ENCODE measurements at regions of chr1 and their contacts with region 1.

Region 1: DNA sequence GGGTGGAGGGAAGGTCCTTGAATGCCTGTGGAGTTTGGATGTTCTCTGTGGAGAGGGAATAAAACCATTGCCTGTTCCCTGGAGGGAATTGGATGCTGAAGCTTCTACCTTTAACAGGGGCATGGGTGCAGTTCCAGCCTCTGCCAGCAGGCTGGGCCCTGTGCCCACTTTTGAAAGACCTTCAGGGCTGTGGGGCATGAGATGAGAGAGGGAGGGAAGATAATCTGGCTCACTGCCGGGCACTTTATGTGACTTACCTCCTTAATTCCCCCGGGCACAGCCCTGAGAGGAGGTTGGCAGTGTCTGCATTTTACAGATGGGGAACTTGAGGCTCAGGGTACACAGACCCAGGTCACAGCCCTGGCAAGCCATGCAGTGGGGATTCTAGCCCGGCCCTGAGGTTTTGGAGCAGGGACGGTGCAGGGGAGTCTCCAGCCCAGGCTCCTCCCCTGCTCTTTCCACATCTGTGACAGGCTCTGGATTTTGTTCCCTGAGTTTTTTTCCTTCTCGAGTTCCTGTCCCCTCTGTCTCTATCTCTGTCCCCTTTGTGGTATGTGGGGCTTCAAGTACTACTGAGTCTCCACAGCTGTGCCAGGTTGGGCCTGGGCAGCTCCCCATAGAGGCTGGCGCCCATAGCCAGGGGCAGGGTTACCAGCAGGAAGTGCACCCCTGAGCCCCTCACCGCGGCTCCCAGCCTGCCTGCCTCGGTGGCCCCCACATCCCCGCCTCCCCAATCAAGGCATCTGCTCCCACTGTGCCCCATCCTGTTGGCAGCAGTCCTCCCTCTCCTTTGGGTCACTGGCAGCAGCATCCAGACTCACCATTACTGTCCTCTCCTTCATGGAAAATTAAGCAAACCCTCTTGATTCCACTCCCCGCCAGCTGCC is 14.0 kb upstream of the THEMIS2 start:
- DNase-seq: peak; percentile 84 to 89 (median 88)
- H3K4me3 ChIP-seq: peak overlapping the region in 2 of 3 experiments; percentile 13 to 60
- H3K4me3 Mint-ChIP-seq: peak overlapping the region; percentile 60 to 86
- H3K27ac ChIP-seq: peak overlapping the region; percentile 73 to 75
- H3K27ac Mint-ChIP-seq: peak overlapping the region; percentile 91 to 100 (median 96)
- H3K4me1 ChIP-seq: peaks cover 49 to 54% of the 10 kb centered on the region in 2 donors
- H3K4me1 Mint-ChIP-seq: peaks cover 56% of the 10 kb centered on the region
- H3K27me3 ChIP-seq: no peaks in the 10 kb centered on the region
- H3K27me3 Mint-ChIP-seq: peaks cover 0 to 1% (median 0%) of the 10 kb centered on the region in 3 donors
- CTCF ChIP-seq: peak; percentile 98

Region 2: DNA sequence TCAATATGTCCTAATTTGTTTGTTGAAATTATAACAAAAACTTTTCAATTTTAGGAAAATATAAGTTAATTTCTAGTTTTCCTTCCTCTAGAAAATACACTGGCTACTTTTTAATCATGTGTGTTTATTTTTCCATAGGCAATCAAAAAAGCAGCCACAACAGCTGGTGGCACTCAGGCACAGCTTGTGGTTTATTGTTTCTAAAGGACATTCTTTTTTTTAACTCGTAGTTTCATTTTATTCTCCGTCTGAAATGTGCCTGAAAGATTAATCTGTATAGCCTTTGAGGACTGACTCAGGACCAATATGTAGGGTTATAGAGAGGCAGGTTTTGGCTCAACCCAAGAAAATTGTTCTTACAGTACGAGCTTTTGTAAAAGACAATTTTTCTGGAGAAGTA is 106.0 kb before region 1 on chr1:
- intact Hi-C with region 1: no loop called
- DNase-seq: no peak
- H3K4me3 ChIP-seq: no peak overlapping the region
- H3K4me3 Mint-ChIP-seq: no peak overlapping the region
- H3K27ac ChIP-seq: no peak overlapping the region
- H3K27ac Mint-ChIP-seq: no peak overlapping the region
- H3K4me1 ChIP-seq: no peaks in the 10 kb centered on the region
- H3K4me1 Mint-ChIP-seq: peaks cover 4% of the 10 kb centered on the region
- H3K27me3 ChIP-seq: no peaks in the 10 kb centered on the region
- H3K27me3 Mint-ChIP-seq: no peaks in the 10 kb centered on the region
- CTCF ChIP-seq: no peak

Region 3: DNA sequence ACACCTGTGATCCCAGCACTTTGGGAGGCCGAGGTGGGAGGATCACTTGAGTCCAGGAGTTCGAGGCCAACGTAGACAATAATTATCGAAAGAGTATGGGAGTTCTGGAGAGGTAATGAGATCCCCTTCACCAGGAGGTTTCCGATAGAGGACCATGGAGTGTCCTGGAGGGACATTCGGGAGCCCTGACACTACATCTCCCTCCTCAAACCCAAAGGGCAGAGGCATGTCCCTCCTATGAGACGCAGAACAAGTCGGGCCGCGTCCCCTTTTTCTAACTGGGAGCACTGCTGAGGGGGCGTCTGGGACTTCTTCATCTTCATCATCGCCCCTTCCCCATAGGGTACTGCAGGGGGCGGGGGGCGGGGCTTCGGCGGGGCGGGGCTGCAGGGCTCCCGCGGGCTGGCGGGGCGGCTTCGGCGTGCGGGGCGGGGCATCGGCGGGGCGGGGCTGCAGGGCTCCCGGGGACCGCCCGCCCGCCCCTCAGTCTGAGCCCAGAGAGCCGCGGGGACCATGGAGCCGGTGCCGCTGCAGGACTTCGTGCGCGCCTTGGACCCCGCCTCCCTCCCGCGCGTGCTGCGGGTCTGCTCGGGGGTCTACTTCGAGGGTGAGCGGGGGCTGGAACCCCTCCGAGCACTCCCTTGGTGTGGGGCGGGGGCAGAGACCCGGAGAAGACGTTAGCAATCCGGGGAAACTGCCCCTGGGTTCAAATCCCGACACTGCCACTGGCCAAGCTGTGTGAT is 13.9 kb after region 1 on chr1 and contains the start of gene THEMIS2:
- intact Hi-C with region 1: loop called (anchors 2 kb)
- DNase-seq: peak; percentile 65 to 67 (median 65)
- H3K4me3 ChIP-seq: peak within 1 kb of the TSS; percentile 86 to 100 (median 90)
- H3K4me3 Mint-ChIP-seq: peak within 1 kb of the TSS; percentile 99
- H3K27ac ChIP-seq: peak within 1 kb of the TSS; percentile 96 to 99
- H3K27ac Mint-ChIP-seq: peak within 1 kb of the TSS; percentile 99
- H3K4me1 ChIP-seq: peaks cover 73 to 87% of the 10 kb centered on the region in 2 donors
- H3K4me1 Mint-ChIP-seq: peaks cover 56% of the 10 kb centered on the region
- H3K27me3 ChIP-seq: no peaks in the 10 kb centered on the region
- H3K27me3 Mint-ChIP-seq: peaks cover 0 to 1% (median 0%) of the 10 kb centered on the region in 3 donors
- CTCF ChIP-seq: no peak
- polyA plus RNA-seq, gene THEMIS2: 306 to 618 (median 344) TPM

Region 4: GRCh38 chr1:27891196-27891889 is 33.0 kb after region 1 on chr1:
- intact Hi-C with region 1: loop called (anchors 1 to 5 kb)
- DNase-seq: peak; percentile 86 to 92 (median 91)
- H3K4me3 ChIP-seq: peak overlapping the region in 1 of 3 experiments; percentile 45
- H3K4me3 Mint-ChIP-seq: peak overlapping the region; percentile 47 to 63
- H3K27ac ChIP-seq: peak overlapping the region; percentile 91 to 99
- H3K27ac Mint-ChIP-seq: peak overlapping the region; percentile 96 to 99 (median 99)
- H3K4me1 ChIP-seq: peaks cover 69 to 72% of the 10 kb centered on the region in 2 donors
- H3K4me1 Mint-ChIP-seq: peaks cover 67% of the 10 kb centered on the region
- H3K27me3 ChIP-seq: no peaks in the 10 kb centered on the region
- H3K27me3 Mint-ChIP-seq: no peaks in the 10 kb centered on the region
- CTCF ChIP-seq: peak; percentile 63

Region 5: DNA sequence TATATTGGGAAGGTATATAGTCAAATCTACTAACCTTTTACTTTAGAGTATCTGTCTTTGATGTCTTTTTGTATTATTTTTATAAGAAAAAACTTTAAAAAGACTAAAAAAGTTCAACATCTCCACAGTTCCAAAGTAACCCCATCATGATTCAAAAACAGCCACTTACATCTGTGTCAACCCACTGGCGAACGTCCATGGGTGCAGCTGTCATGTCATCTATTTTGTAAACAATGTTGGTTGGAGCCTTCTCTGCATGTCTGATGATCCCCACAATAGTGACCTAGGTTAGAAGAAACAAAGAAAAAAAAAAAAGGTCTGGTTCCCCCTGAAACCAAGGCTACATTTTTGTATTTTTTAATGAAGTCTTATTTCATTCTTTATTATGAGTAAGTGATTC is 48.4 kb after region 1 on chr1:
- intact Hi-C with region 1: loop called in 1 of 2 experiments (anchors 5 kb)
- DNase-seq: no peak
- H3K4me3 ChIP-seq: no peak overlapping the region
- H3K4me3 Mint-ChIP-seq: no peak overlapping the region
- H3K27ac ChIP-seq: peak overlapping the region in 1 of 2 donors; percentile 70
- H3K27ac Mint-ChIP-seq: peak overlapping the region in 4 of 7 donors; percentile 37 to 86 (median 58)
- H3K4me1 ChIP-seq: peaks cover 24 to 29% of the 10 kb centered on the region in 2 donors
- H3K4me1 Mint-ChIP-seq: peaks cover 38% of the 10 kb centered on the region
- H3K27me3 ChIP-seq: no peaks in the 10 kb centered on the region
- H3K27me3 Mint-ChIP-seq: no peaks in the 10 kb centered on the region
- CTCF ChIP-seq: no peak

Region 6: DNA sequence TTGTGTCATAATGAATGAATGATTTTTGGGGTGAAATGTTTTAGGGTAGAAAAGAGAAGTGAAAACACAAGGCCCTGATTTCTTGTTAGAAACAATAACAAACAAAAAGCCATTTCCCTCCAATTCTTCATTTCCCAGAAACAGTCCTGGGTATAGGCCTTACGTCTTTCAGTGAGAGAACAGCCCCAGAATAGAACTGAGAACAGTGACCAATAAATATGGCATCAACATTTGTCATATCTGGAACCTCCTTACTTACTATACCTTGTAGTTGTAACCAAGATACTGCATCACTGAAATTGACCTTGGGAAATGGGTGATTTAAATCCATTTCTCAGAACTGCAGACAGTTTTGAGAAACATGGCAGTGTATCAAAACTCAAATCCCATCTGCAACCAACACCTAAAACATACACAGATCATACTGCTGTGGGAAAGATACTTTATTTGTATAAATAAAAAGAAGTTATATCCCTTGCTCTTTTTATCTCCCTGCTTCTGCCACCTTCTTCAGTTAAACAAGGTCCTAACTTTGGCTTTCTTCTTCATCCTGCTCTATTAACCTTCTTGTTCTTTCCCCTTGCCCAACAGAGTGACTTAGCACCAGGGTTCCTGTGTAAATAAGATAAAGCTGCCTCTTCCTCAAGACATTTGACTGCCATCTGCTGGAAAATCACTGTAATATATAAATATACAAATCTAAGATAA is 121.0 kb after region 1 on chr1:
- intact Hi-C with region 1: loop called (anchors 1 to 2 kb)
- DNase-seq: peak; percentile 64 to 82 (median 80)
- H3K4me3 ChIP-seq: no peak overlapping the region
- H3K4me3 Mint-ChIP-seq: no peak overlapping the region
- H3K27ac ChIP-seq: peak overlapping the region in 1 of 2 donors; percentile 72
- H3K27ac Mint-ChIP-seq: no peak overlapping the region
- H3K4me1 ChIP-seq: peaks cover 11 to 13% of the 10 kb centered on the region in 2 donors
- H3K4me1 Mint-ChIP-seq: no peaks in the 10 kb centered on the region
- H3K27me3 ChIP-seq: no peaks in the 10 kb centered on the region
- H3K27me3 Mint-ChIP-seq: no peaks in the 10 kb centered on the region
- CTCF ChIP-seq: peak; percentile 75